ENCODE measurements at regions of chr4 and their contacts with region 1.

Region 1: DNA sequence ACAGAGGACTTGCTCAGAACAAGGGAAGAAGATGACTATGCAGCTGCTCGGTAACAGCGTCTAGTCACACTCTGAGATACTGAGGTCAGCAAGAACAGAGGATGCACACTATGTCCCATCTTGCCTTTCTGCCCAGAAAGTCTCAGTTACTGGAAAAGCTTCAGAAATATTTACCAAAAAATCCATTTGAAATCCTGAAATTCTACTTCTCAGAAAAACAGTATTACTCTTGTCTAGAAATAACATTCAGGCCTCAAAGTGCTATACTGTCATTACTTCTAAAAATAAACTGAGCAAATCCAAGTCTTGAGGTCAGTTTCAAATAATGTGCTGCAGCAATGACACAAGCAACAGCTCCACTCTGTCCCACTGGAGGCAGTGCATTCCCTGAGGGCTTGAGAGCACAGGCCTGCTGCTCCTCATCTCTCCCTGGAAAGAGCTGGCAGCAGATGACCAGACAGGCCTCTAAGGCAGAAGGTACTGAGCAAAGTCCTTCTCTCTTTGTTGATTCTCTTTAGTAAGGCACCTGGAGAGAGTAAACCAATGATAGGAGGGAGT is 76.9 kb downstream of the CAMK2D start:
- DNase-seq: peak; percentile 84
- ATAC-seq: peak; percentile 87
- H3K4me3 ChIP-seq: no peak overlapping the region
- H3K27ac ChIP-seq: peak overlapping the region; percentile 9; the same call in 1 of the 2 replicates
- H3K4me1 ChIP-seq: peaks cover 6% of the 10 kb centered on the region
- H3K27me3 ChIP-seq: no peaks in the 10 kb centered on the region
- CTCF ChIP-seq: peak; percentile 52
- POLR2A ChIP-seq: no peak
- RAD21 ChIP-seq: peak; percentile 60

Region 2: GRCh38 chr4:113547487-113548042 is 137.0 kb before region 1 on chr4:
- CTCF ChIA-PET with region 1: interaction called, 3 read pairs
- POLR2A ChIA-PET with region 1: no interaction called
- dilution Hi-C with region 1: no loop called
- in situ Hi-C with region 1: no loop called
- intact Hi-C with region 1: loop called (anchors 1 kb)
- DNase-seq: peak; percentile 95
- ATAC-seq: peak; percentile 99
- H3K4me3 ChIP-seq: no peak overlapping the region
- H3K27ac ChIP-seq: no peak overlapping the region
- H3K4me1 ChIP-seq: no peaks in the 10 kb centered on the region
- H3K27me3 ChIP-seq: no peaks in the 10 kb centered on the region
- CTCF ChIP-seq: peak; percentile 90
- POLR2A ChIP-seq: no peak
- RAD21 ChIP-seq: peak; percentile 78